Transverse colon (tissue), 4 donors: ENCODE measurements at regions of chr6 and their contacts with region 1.

Region 1: DNA sequence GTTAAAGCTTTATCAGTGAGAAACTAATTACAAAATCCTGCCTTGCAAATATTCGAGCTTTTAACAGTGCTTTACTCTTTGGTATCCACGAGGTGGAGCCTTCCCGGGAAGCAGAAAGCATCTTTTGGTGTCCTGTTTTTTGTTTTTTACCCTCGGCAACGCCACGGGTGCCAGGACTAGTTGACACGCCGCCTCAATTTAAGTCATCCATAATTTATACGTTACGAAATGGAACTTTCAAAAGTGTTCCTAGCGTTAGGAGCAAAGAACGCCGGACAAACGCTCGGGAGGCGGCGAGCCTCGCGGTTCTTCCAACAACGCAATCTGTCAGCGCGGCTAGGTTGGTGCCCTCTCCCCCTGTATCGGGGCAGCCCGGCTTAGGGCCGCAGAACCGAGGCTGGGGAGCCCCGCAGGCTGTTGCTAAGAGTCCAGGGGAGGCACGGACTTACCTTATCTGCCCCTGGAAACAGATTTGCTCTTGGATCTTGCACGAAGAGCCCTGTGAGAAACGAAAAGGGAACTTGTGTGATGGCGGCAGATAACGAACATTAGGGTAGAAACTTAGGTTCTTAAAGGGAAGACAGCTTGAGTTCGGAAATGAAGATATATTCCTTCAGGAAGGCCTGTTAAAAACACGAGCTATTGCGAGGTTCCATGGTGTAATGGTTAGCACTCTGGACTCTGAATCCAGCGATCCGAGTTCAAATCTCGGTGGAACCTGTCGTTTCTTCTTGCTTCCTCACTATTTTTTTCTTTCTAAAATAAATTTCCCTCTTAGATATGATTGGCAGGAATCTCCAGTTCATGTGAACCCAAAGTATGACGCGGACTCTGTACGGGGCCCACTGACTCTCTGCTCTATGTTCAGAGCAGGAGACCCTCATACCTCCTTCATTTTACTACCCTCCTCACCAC is 46.2 kb upstream of the ZNF184 start:
- DNase-seq: peak; percentile 68
- H3K4me3 ChIP-seq: peak overlapping the region; percentile 48 to 93 (median 68)
- H3K27ac ChIP-seq: peak overlapping the region; percentile 84 to 91 (median 89)
- H3K4me1 ChIP-seq: peaks cover 0 to 9% (median 6%) of the 10 kb centered on the region in 4 donors
- H3K27me3 ChIP-seq: peaks cover 27% of the 10 kb centered on the region
- CTCF ChIP-seq: peak; percentile 58 to 82 (median 66)
- EP300 ChIP-seq: no peak
- POLR2A ChIP-seq: no peak

Region 2: GRCh38 chr6:27157459-27158315 is 361.5 kb before region 1 on chr6:
- in situ Hi-C with region 1: loop called in 1 of 4 experiments (anchors 25 kb)
- intact Hi-C with region 1: no loop called
- DNase-seq: peak; percentile 74
- H3K4me3 ChIP-seq: peak overlapping the region; percentile 12 to 51 (median 26)
- H3K27ac ChIP-seq: peak overlapping the region; percentile 8 to 50 (median 28)
- H3K4me1 ChIP-seq: peaks cover 4 to 14% (median 8%) of the 10 kb centered on the region in 4 donors
- H3K27me3 ChIP-seq: no peaks in the 10 kb centered on the region
- CTCF ChIP-seq: peak; percentile 16 to 58 (median 39)
- EP300 ChIP-seq: no peak
- POLR2A ChIP-seq: no peak

Region 3: GRCh38 chr6:27275025-27275956 is 243.8 kb before region 1 on chr6:
- in situ Hi-C with region 1: no loop called
- intact Hi-C with region 1: no loop called
- DNase-seq: no peak
- H3K4me3 ChIP-seq: no peak overlapping the region
- H3K27ac ChIP-seq: no peak overlapping the region
- H3K4me1 ChIP-seq: peaks cover 0 to 8% (median under 1%) of the 10 kb centered on the region in 4 donors
- H3K27me3 ChIP-seq: peaks cover 88% of the 10 kb centered on the region
- CTCF ChIP-seq: no peak
- EP300 ChIP-seq: no peak
- POLR2A ChIP-seq: no peak

Region 4: GRCh38 chr6:27687154-27688013 is 168.2 kb after region 1 on chr6:
- in situ Hi-C with region 1: loop called in 1 of 4 experiments (anchors 10 kb)
- intact Hi-C with region 1: no loop called
- DNase-seq: peak; percentile 83
- H3K4me3 ChIP-seq: peak overlapping the region; percentile 22 to 55 (median 42)
- H3K27ac ChIP-seq: peak overlapping the region; percentile 56 to 64 (median 61)
- H3K4me1 ChIP-seq: peaks cover 0 to 4% (median 2%) of the 10 kb centered on the region in 4 donors
- H3K27me3 ChIP-seq: peaks cover 17% of the 10 kb centered on the region
- CTCF ChIP-seq: peak; percentile 56 to 67 (median 59)
- EP300 ChIP-seq: no peak
- POLR2A ChIP-seq: no peak

Region 5: GRCh38 chr6:27753668-27754407 is 234.7 kb after region 1 on chr6:
- in situ Hi-C with region 1: loop called in 3 of 4 experiments (anchors 10 to 25 kb)
- intact Hi-C with region 1: no loop called
- DNase-seq: peak; percentile 79
- H3K4me3 ChIP-seq: peak overlapping the region in 3 of 4 donors; percentile 66 to 92 (median 85)
- H3K27ac ChIP-seq: peak overlapping the region; percentile 89 to 96 (median 92)
- H3K4me1 ChIP-seq: peaks cover 3 to 26% (median 12%) of the 10 kb centered on the region in 4 donors
- H3K27me3 ChIP-seq: peaks cover 5% of the 10 kb centered on the region
- CTCF ChIP-seq: peak in 2 of 5 experiments; percentile 22 to 25
- EP300 ChIP-seq: no peak
- POLR2A ChIP-seq: no peak

Region 6: DNA sequence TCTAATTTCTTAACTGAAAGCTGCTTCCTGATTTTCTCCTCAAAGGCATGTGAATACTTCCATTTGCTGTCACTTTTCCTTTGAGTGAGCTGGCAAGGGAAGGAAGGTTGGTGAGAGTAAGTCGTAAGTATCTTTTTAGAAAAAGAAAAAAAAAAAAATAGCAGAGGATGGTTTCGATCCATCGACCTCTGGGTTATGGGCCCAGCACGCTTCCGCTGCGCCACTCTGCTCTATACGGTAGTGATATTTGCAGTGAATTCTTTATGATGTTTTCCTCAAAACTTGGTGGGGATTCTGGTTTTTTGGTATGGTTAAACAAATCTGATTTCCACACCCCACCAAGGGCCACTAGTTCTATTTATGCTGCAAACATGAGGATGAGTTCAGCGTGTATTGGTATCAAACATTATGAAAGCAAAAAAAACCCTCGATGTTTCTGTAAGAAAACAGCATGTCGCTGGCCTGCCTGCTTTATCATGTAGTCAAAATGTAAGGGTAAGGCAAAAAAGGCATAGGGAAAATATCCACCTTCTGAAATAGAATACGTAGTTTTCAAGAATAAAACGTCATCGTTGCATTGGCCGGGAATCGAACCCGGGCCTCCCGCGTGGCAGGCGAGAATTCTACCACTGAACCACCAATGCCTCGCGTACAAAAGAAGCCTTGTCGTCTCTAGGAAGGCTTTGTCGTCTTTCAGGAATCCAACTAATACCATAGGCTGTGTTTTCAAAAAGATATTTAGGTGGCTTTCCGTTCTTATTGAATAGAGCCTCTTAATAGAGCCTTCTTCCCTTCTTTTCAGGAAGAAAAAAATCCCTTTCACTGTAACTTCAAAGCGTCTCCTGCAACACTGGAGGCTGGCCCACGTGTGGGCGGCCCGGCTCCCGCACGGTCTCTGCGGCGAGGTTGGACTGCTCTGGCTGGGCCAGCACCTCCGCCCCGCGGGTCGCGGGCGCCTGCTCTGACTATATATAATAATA is 383.5 kb after region 1 on chr6:
- in situ Hi-C with region 1: loop called in 2 of 4 experiments (anchors 25 kb)
- intact Hi-C with region 1: no loop called
- DNase-seq: peak; percentile 91
- H3K4me3 ChIP-seq: peak overlapping the region; percentile 24 to 63 (median 46)
- H3K27ac ChIP-seq: peak overlapping the region; percentile 80 to 92 (median 88)
- H3K4me1 ChIP-seq: peaks cover 0 to 10% (median 5%) of the 10 kb centered on the region in 4 donors
- H3K27me3 ChIP-seq: peaks cover 8% of the 10 kb centered on the region
- CTCF ChIP-seq: peak in 1 of 5 experiments; percentile 7
- EP300 ChIP-seq: no peak
- POLR2A ChIP-seq: no peak

Region 7: GRCh38 chr6:28506807-28507475 is 987.8 kb after region 1 on chr6:
- in situ Hi-C with region 1: no loop called
- intact Hi-C with region 1: no loop called
- DNase-seq: no peak
- H3K4me3 ChIP-seq: no peak overlapping the region
- H3K27ac ChIP-seq: no peak overlapping the region
- H3K4me1 ChIP-seq: no peaks in the 10 kb centered on the region
- H3K27me3 ChIP-seq: no peaks in the 10 kb centered on the region
- CTCF ChIP-seq: no peak
- EP300 ChIP-seq: no peak
- POLR2A ChIP-seq: no peak